AG04449 (cell line): ENCODE measurements at regions of chr1 and their contacts with region 1.

Region 1: DNA sequence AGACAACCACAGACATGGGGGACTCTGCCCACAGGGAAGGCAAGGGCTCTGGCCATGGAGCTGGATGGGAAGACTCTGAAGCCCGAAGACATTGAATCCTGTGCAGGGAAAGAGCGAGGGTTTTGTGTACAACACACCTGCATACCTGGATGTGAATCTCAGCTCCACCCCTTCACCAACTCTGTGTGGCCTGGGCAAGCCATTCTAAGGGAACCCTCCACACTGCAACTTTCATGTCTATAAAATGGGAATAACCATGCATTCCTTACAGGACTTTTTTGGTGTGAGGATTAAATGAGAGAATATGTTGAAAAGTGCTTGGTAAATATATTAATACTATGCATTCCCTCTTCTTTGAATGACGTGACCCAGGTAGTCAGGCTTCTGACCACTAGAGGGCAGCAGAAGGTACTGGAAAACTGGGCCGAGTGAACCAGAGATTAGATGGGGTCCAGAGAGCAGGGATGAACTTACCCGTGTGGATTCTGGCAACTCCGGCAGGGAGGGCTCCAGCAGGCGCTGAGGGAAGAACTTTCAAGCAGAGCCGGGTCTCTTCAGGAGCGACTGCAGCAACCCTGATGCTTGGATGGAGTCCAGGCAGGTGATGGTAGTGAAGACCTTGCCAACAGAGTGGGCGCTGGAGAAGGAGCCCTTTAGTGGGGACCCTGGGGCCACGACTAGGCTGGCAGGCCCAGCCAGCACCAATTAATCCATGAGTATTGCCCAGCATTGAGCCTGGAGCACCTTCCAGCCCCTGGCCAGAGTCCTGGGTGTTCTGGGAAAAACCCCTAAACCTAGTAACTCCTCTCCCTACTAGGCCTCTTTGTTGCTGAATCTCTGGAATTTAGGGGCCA is 834 bp upstream of the ELF3 start:
- DNase-seq: peak; percentile 41
- H3K4me3 ChIP-seq: no peak overlapping the region
- CTCF ChIP-seq: peak; percentile 74

Region 2: GRCh38 chr1:202023033-202023486 is 13.5 kb after region 1 on chr1:
- CTCF ChIA-PET with region 1: interaction called, 157 read pairs
- POLR2A ChIA-PET with region 1: no interaction called
- DNase-seq: no peak
- H3K4me3 ChIP-seq: no peak overlapping the region
- CTCF ChIP-seq: no peak

Region 3: DNA sequence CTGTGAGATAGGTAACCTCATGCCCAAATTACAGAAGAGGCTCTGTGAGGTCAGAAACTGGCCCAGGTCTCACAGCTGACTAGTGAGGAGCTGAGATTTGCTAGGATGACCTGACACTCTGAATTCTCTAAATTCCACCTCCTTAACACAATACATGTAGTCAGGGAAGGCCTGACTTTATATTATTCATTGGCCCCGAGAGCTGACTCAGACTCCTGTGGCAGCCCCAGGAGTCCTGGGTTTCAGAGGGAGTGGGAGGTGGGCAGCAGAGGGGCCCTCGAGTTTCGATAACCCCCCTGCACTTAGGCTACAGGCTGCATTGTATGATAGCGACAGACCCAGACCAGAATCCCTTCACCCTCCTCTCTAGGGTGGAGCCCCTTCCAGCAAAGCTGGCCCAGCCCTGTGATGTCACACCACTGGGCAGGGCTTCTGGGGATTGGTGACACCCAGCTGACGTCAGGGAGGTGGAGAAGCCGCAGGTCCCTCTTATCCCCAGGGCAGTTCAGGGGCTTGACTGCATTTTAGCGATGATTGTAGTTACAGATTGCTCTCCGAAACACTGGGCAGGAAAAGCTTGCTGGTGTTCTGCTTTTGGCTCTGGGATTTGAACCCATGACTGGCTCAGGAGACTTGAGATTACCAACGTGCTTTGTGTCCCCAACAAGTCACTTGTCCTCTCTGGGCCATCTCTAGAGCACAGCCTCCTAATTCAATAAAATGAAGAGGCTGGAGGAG is 96.2 kb after region 1 on chr1:
- CTCF ChIA-PET with region 1: interaction called, 956 read pairs
- POLR2A ChIA-PET with region 1: no interaction called
- DNase-seq: no peak
- H3K4me3 ChIP-seq: no peak overlapping the region
- CTCF ChIP-seq: no peak

Region 4: GRCh38 chr1:202135221-202135721 is 125.7 kb after region 1 on chr1:
- CTCF ChIA-PET with region 1: interaction called, 179 read pairs
- POLR2A ChIA-PET with region 1: no interaction called
- DNase-seq: no peak
- H3K4me3 ChIP-seq: no peak overlapping the region
- CTCF ChIP-seq: peak; percentile 85

Region 5: DNA sequence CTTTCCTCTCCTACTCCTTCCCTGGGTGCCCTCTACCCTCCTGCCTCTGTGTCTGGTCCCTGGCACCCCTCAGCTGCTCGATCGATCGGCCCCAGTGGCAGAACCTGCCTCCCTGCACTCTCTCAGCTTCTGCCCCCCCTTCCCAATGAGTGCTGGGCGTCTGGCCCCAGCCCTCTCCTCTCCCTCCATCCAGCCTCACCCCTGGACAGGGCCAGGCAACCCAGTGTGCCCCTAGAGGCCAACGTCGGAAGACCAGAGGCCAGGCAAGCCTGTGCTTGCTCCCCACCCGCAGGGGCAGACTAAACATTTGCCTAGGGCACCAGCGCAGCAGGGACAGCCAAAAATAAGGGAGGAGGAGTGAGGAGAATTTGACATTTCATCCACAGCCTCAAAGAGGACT is 227.5 kb after region 1 on chr1:
- CTCF ChIA-PET with region 1: no interaction called
- POLR2A ChIA-PET with region 1: no interaction called
- DNase-seq: no peak
- H3K4me3 ChIP-seq: no peak overlapping the region
- CTCF ChIP-seq: peak; percentile 51